ENCODE measurements at regions of chr11 and their contacts with region 1.

Region 1: GRCh38 chr11:86990515-86990914 is 35.3 kb upstream of the FZD4 start:
- DNase-seq: no peak
- ATAC-seq: no peak
- H3K4me3 ChIP-seq: no peak overlapping the region
- H3K4me3 Mint-ChIP-seq: no peak overlapping the region
- H3K27ac ChIP-seq: no peak overlapping the region
- H3K27ac Mint-ChIP-seq: no peak overlapping the region
- H3K4me1 ChIP-seq: no peaks in the 10 kb centered on the region
- H3K4me1 Mint-ChIP-seq: no peaks in the 10 kb centered on the region
- H3K27me3 ChIP-seq: no peaks in the 10 kb centered on the region
- H3K27me3 Mint-ChIP-seq: peaks cover 0 to 3% of the 10 kb centered on the region in 2 donors
- CTCF ChIP-seq: no peak

Region 2: DNA sequence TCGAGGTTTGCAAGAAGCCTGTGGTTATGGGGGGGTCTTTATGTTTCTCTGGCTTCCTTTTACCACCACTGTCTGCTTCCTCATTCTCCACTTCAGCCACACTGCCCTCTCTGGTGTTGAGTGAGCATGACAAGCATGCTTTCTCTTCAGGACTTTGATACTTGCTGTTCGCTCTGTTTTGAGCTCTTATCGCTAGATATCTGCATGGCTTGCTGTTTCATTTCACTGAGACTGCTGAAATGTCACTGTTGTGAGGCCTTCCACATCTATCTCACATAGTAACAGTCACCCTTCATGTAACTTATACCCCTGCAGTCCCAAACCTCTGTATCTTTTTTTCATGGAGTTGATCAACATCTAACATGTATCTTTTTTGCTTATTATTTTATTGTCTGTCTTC is 107.1 kb after region 1 on chr11:
- intact Hi-C with region 1: loop called (anchors 1 kb)
- DNase-seq: peak in 1 of 2 donors; percentile 65
- ATAC-seq: peak; percentile 76 to 97 (median 89)
- H3K4me3 ChIP-seq: no peak overlapping the region
- H3K4me3 Mint-ChIP-seq: no peak overlapping the region
- H3K27ac ChIP-seq: no peak overlapping the region
- H3K27ac Mint-ChIP-seq: peak overlapping the region in 1 of 2 donors; percentile 53
- H3K4me1 ChIP-seq: no peaks in the 10 kb centered on the region
- H3K4me1 Mint-ChIP-seq: peaks cover 9 to 10% of the 10 kb centered on the region in 2 donors
- H3K27me3 ChIP-seq: no peaks in the 10 kb centered on the region
- H3K27me3 Mint-ChIP-seq: no peaks in the 10 kb centered on the region
- CTCF ChIP-seq: peak; percentile 77

Region 3: DNA sequence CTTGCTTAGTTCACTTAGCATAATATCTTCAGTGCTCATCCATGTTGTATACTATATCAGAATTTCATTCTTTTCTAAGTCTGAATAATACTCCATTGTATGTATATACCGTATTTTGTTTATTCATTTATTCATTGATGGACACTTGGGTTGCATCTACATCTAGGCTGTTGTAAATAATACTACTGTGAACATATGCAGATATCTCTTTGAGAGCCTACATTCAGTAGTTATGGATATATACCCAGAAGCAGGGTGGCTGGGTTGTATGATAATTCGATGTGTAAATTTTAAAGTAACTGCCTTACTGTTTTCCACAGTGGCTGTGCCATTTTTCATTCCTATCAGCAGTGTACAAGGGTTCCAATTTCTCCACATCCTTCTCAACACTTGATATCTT is 163.7 kb after region 1 on chr11:
- intact Hi-C with region 1: no loop called
- DNase-seq: no peak
- ATAC-seq: no peak
- H3K4me3 ChIP-seq: no peak overlapping the region
- H3K4me3 Mint-ChIP-seq: no peak overlapping the region
- H3K27ac ChIP-seq: no peak overlapping the region
- H3K27ac Mint-ChIP-seq: no peak overlapping the region
- H3K4me1 ChIP-seq: no peaks in the 10 kb centered on the region
- H3K4me1 Mint-ChIP-seq: peaks cover 37 to 45% of the 10 kb centered on the region in 2 donors
- H3K27me3 ChIP-seq: no peaks in the 10 kb centered on the region
- H3K27me3 Mint-ChIP-seq: no peaks in the 10 kb centered on the region
- CTCF ChIP-seq: no peak

Measured in natural killer cell (primary cell).